ENCODE measurements at regions of chr13 and their contacts with region 1.

Region 1: DNA sequence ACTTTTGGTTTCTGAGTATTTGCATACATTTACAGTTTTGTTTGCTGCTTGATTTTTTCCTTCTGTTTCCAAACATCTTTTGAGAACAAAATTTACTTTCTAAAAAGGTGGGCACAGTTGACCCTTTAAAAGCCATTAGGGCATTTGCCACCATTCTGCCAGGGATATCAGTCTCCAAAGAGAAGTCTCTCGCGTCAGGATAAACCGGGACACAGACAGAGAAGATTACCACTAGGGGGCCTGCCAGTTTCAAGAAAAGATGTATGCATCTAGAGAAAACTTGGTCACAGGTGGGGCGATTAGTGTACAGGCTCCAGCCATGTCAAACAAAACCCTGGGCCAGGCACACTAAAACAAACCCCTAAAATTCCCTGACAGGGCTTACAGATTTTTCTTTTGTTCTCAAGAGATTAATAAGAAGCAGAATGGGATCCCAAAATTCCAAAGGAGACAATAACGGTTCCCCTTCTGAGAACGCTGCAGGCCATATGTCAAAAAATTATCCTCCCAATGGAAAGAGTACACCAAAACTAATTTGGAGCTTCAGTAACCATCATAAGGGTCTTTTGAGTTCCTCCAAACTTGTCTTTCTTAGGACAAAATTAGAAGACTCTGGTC is 10.7 kb upstream of the PABPC3 start:
- DNase-seq: peak in 1 of 9 donors; percentile 1
- ATAC-seq: no peak
- H3K4me3 ChIP-seq: no peak overlapping the region
- H3K4me3 Mint-ChIP-seq: no peak overlapping the region
- H3K27ac ChIP-seq: no peak overlapping the region
- H3K27ac Mint-ChIP-seq: no peak overlapping the region
- H3K4me1 ChIP-seq: no peaks in the 10 kb centered on the region
- H3K4me1 Mint-ChIP-seq: no peaks in the 10 kb centered on the region
- H3K27me3 ChIP-seq: no peaks in the 10 kb centered on the region
- H3K27me3 Mint-ChIP-seq: peaks cover 12 to 19% (median 18%) of the 10 kb centered on the region in 5 donors

Region 2: GRCh38 chr13:25114220-25114619 is 29.0 kb after region 1 on chr13:
- CTCF ChIA-PET with region 1: no interaction called
- POLR2A ChIA-PET with region 1: no interaction called
- intact Hi-C with region 1: no loop called
- DNase-seq: peak in 8 of 9 donors; percentile 12 to 59 (median 27)
- ATAC-seq: peak; percentile 77
- H3K4me3 ChIP-seq: no peak overlapping the region
- H3K4me3 Mint-ChIP-seq: no peak overlapping the region
- H3K27ac ChIP-seq: no peak overlapping the region
- H3K27ac Mint-ChIP-seq: no peak overlapping the region
- H3K4me1 ChIP-seq: no peaks in the 10 kb centered on the region
- H3K4me1 Mint-ChIP-seq: peaks cover 0 to 6% (median 0%) of the 10 kb centered on the region in 7 donors
- H3K27me3 ChIP-seq: no peaks in the 10 kb centered on the region
- H3K27me3 Mint-ChIP-seq: peaks cover 25 to 50% (median 37%) of the 10 kb centered on the region in 5 donors

Region 3: DNA sequence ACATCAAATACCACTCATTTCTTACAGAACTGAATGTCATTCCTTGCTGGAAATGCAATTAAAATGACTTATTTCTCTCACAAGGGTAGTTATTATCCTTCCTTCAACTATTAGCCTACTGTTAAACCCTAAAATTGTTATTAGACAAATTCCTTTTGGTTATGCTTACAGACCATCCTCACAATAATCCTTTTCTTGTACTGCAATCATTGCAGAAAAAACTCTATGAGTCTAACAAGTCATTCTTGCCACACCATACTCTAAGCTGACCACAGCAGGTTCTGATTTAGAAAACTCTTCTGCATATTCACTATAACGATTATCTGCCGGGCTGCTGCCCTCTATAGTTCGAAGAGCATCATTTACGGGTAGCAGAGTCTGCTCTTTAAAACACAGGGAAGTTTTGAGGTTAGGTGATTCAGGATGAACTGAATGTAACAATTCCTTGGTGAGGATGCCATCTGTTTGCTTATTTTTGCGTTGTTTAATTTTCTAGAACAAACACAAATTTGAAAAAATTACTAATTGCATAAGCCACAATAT is 163.8 kb after region 1 on chr13:
- CTCF ChIA-PET with region 1: no interaction called
- POLR2A ChIA-PET with region 1: no interaction called
- intact Hi-C with region 1: loop called in 1 of 2 experiments (anchors 2 kb)
- DNase-seq: no peak
- ATAC-seq: peak; percentile 63
- H3K4me3 ChIP-seq: no peak overlapping the region
- H3K4me3 Mint-ChIP-seq: no peak overlapping the region
- H3K27ac ChIP-seq: no peak overlapping the region
- H3K27ac Mint-ChIP-seq: no peak overlapping the region
- H3K4me1 ChIP-seq: no peaks in the 10 kb centered on the region
- H3K4me1 Mint-ChIP-seq: peaks cover 0 to 3% (median 0%) of the 10 kb centered on the region in 7 donors
- H3K27me3 ChIP-seq: no peaks in the 10 kb centered on the region
- H3K27me3 Mint-ChIP-seq: no peaks in the 10 kb centered on the region

Region 4: GRCh38 chr13:25375727-25376358 is 290.6 kb after region 1 on chr13:
- CTCF ChIA-PET with region 1: no interaction called
- POLR2A ChIA-PET with region 1: no interaction called
- intact Hi-C with region 1: loop called in 1 of 2 experiments (anchors 2 kb)
- DNase-seq: peak in 8 of 9 donors; percentile 8 to 50 (median 30)
- ATAC-seq: peak; percentile 57
- H3K4me3 ChIP-seq: no peak overlapping the region
- H3K4me3 Mint-ChIP-seq: peak overlapping the region in 1 of 10 donors; percentile 35
- H3K27ac ChIP-seq: no peak overlapping the region
- H3K27ac Mint-ChIP-seq: no peak overlapping the region
- H3K4me1 ChIP-seq: no peaks in the 10 kb centered on the region
- H3K4me1 Mint-ChIP-seq: peaks cover 5 to 18% (median 13%) of the 10 kb centered on the region in 7 donors
- H3K27me3 ChIP-seq: peaks cover 0 to 3% of the 10 kb centered on the region in 2 donors
- H3K27me3 Mint-ChIP-seq: peaks cover 51 to 62% (median 57%) of the 10 kb centered on the region in 5 donors

Measured in naive thymus-derived CD4-positive, alpha-beta T cell (primary cell).